ENCODE measurements at regions of chr3 and their contacts with region 1.

Region 1: GRCh38 chr3:112979240-112979832 is 4.4 kb upstream of the CD200R1 start:
- DNase-seq: peak; percentile 14
- ATAC-seq: no peak
- H3K4me3 ChIP-seq: no peak overlapping the region
- H3K27ac ChIP-seq: no peak overlapping the region
- H3K4me1 ChIP-seq: peaks cover 11% of the 10 kb centered on the region; the same call in 1 of the 2 replicates
- H3K27me3 ChIP-seq: peaks cover 0 to 5% of the 10 kb centered on the region in 2 experiments; a peak in 1 of 5 replicates
- CTCF ChIP-seq: peak; percentile 41
- EP300 ChIP-seq: no peak
- POLR2A ChIP-seq: no peak
- RAD21 ChIP-seq: no peak

Region 2: DNA sequence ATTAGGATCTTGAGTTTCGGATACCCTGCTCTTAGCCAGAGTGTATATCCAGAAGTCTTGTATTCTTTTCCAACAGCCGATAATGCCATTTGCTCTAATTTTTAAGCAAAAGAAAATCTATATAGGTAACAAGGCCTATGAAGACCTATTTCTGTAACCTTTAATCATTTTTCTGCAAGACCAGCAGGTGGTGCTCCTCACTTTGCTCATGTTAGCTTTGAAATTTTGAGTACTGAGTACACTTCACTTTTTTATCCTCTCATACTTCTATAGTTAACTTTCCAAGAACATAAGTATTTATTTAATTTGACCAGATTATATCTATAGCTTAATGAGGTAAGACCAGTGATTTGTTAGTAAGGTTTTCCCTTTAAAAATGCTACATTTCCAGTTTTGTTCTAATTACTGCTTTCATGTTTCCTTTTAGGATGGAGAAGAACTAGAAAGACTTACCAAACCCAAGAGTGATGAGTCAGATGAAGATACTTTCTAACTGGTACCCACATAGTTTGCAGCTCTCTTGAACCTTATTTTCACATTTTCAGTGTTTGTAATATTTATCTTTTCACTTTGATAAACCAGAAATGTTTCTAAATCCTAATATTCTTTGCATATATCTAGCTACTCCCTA is 397.0 kb before region 1 on chr3:
- CTCF ChIA-PET with region 1: no interaction called
- POLR2A ChIA-PET with region 1: no interaction called
- in situ Hi-C with region 1: no loop called
- intact Hi-C with region 1: loop called (anchors 2 kb)
- DNase-seq: peak; percentile 21
- ATAC-seq: peak; percentile 58
- H3K4me3 ChIP-seq: no peak overlapping the region
- H3K27ac ChIP-seq: no peak overlapping the region
- H3K4me1 ChIP-seq: no peaks in the 10 kb centered on the region
- H3K27me3 ChIP-seq: no peaks in the 10 kb centered on the region
- CTCF ChIP-seq: peak; percentile 50
- EP300 ChIP-seq: no peak
- POLR2A ChIP-seq: no peak
- RAD21 ChIP-seq: no peak

Region 3: DNA sequence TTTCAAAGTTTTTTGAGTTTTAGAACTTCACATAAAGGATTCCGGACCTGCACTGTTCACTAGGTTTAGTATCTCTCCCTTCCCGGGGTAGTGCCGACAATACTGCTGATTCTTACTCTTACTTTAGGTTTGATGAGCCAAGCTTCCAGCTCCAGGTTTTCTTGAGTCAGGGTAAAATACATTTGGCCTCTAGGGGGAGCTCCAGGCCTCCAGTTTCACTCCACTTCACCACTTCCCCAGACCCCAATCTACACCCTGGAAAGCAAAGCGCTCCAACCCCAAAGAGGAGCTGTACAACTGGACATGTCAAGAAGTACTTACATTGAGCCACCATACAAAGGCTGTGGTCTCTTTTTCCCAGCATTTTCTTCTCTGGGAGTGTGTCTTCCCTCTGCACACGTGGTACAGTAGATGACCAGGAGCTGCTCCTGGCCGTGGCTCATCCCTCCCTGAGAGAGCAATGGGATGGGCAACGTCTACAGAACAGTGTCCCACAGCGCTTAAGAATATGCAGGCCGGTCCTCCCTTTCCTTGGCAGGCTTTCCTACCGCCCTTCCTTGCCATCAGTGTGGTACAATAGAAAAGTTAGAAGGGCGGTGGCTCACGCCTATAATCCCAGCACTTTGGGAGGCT is 244.5 kb before region 1 on chr3:
- CTCF ChIA-PET with region 1: interaction called, 8 read pairs
- POLR2A ChIA-PET with region 1: no interaction called
- in situ Hi-C with region 1: loop called (anchors 5 kb)
- intact Hi-C with region 1: loop called (anchors 1 kb)
- DNase-seq: peak; percentile 49
- ATAC-seq: peak; percentile 96
- H3K4me3 ChIP-seq: no peak overlapping the region
- H3K27ac ChIP-seq: no peak overlapping the region
- H3K4me1 ChIP-seq: no peaks in the 10 kb centered on the region
- H3K27me3 ChIP-seq: peaks cover 0 to 3% of the 10 kb centered on the region in 2 experiments; a peak in 1 of 5 replicates
- CTCF ChIP-seq: peak; percentile 73
- EP300 ChIP-seq: no peak
- POLR2A ChIP-seq: no peak
- RAD21 ChIP-seq: 0 out of 2 replicates have a peak, but pooled peaks have one; percentile 17

Region 4: DNA sequence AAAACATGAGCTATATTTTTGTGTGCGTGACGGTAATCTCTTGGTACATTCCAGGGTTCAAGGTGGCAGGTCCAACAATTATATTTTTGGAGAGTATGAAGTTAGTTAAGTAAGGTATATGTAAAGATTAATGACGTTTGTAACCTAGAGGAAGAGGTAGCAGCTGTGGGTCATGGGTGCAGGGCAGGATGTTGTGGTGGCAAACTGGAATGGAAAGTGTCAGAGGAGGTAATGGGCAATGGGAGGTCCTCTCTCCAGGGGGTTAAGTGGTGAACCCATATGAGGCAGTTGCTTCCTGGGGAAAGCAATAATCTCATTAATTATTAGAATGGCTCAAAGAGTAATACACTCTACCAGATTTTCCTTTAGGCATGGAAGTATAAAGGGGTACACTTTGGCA is 131.6 kb before region 1 on chr3:
- CTCF ChIA-PET with region 1: no interaction called
- POLR2A ChIA-PET with region 1: no interaction called
- in situ Hi-C with region 1: no loop called
- intact Hi-C with region 1: no loop called
- DNase-seq: no peak
- ATAC-seq: no peak
- H3K4me3 ChIP-seq: no peak overlapping the region
- H3K27ac ChIP-seq: no peak overlapping the region
- H3K4me1 ChIP-seq: no peaks in the 10 kb centered on the region
- H3K27me3 ChIP-seq: no peaks in the 10 kb centered on the region
- CTCF ChIP-seq: no peak
- EP300 ChIP-seq: no peak
- POLR2A ChIP-seq: no peak
- RAD21 ChIP-seq: no peak

Region 5: GRCh38 chr3:113008117-113008516 is 28.8 kb after region 1 on chr3:
- CTCF ChIA-PET with region 1: no interaction called
- POLR2A ChIA-PET with region 1: no interaction called
- in situ Hi-C with region 1: no loop called
- intact Hi-C with region 1: no loop called
- DNase-seq: no peak
- ATAC-seq: no peak
- H3K4me3 ChIP-seq: no peak overlapping the region
- H3K27ac ChIP-seq: no peak overlapping the region
- H3K4me1 ChIP-seq: no peaks in the 10 kb centered on the region
- H3K27me3 ChIP-seq: no peaks in the 10 kb centered on the region
- CTCF ChIP-seq: no peak
- EP300 ChIP-seq: no peak
- POLR2A ChIP-seq: no peak
- RAD21 ChIP-seq: no peak

Region 6: DNA sequence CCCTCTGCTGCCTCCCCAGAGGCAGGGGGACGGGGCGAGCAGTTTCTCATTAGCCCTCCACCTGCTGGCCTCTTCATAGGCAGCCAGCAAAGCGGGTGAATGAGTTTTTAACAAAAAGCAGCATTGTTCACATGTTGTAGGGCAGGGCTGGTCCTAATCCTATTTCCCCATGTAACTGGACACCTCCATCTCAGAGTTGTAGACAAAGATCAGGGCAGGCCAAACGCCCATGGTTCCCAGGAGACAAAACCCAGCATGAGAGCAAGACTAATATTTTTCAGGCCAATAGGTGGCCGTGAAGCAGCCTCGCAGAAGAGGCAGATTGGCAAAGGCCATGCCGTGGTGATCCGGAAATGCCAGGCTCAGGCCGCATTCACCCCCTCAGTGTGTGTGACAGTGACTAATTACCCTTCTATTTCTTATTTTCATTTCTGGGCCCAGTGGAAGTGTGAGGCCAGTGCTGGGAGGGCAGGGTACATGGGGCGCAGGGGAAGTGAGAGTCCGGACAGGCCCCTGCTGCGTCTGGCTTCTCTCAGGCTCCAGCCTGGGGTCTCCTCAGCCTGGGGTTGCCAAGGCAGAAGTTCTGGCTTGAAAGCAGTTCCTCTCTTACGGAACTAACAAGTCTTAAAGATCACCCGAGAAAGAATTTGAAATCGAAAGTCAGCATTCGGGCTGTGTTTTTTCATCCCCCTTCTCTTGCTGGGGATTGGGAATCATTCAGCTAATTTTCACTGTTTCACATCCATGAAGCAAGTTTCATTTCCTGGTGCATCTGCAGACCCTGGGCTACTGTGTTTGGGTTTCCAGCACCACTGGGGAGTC is 296.8 kb after region 1 on chr3:
- CTCF ChIA-PET with region 1: no interaction called
- POLR2A ChIA-PET with region 1: no interaction called
- in situ Hi-C with region 1: no loop called
- intact Hi-C with region 1: no loop called
- DNase-seq: peak; percentile 76
- ATAC-seq: peak; percentile 88
- H3K4me3 ChIP-seq: peak overlapping the region; percentile 28 to 53 (median 50); a peak in 5 of 6 replicates
- H3K27ac ChIP-seq: no peak overlapping the region
- H3K4me1 ChIP-seq: peaks cover 25% of the 10 kb centered on the region
- H3K27me3 ChIP-seq: peaks cover 6 to 38% of the 10 kb centered on the region in 2 experiments; a peak in 4 of 5 replicates
- CTCF ChIP-seq: peak; percentile 57
- EP300 ChIP-seq: no peak
- POLR2A ChIP-seq: no peak
- RAD21 ChIP-seq: no peak

Measured in HepG2 (cell line).